K562 (cell line): ENCODE measurements at regions of chr22 and their contacts with region 1.

Region 1: DNA sequence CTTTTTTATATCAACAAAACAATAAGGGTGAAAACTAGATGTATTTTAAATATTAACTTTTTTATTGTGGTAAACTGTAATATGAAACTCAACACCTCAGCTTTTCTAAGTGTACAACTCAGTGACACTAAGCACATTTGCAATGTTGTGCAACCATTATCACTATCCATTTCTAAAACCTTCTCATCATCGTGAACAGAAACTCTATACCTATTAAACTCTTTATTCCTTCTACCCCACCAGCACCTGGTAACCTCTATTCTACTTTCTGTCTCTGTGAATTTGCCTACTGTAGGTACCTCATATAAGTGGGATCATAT is 9.4 kb downstream of the HORMAD2 start:
- DNase-seq: no peak
- ATAC-seq: no peak
- H3K4me3 ChIP-seq: no peak overlapping the region
- H3K27ac ChIP-seq: no peak overlapping the region
- H3K4me1 ChIP-seq: no peaks in the 10 kb centered on the region; a peak in 1 of 5 replicates
- H3K27me3 ChIP-seq: no peaks in the 10 kb centered on the region
- CTCF ChIP-seq: no peak
- EP300 ChIP-seq: no peak
- POLR2A ChIP-seq: no peak
- RAD21 ChIP-seq: no peak

Region 2: DNA sequence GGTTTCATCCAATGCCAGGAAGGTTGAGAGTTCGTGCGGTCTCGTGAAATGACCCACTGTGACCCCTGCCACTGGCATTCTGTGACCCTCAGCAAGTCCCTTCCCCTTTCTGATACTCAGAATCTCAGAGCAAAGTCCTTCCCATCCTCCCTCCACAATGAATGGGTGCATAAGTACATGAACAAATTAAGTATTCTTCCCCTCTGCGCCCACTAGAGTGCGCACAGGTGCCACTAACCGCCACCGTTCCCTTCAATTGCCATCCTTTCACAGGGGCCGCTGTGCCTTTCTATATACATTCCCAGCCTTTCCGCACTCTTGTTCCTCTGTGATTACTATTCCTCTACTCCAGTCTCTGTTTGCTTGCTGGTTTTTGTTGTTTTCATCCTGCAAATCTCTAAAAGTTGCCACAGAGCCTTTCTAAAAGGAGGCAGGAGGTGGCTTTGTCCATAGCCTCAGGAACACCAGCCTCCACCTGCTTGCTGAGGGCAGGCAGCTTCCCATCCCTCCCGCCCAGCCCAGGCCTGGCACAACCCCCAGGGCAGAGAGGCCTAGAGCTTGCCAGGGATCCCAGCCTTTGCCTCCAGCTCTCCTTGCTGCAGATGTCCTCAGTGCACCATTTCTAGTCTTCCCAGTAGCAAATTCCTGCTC is 694.6 kb before region 1 on chr22:
- CTCF ChIA-PET with region 1: interaction called, 10 read pairs
- POLR2A ChIA-PET with region 1: no interaction called
- in situ Hi-C with region 1: no loop called
- intact Hi-C with region 1: no loop called
- DNase-seq: peak; percentile 47 to 78 (median 60)
- ATAC-seq: peak; percentile 96
- H3K4me3 ChIP-seq: no peak overlapping the region
- H3K27ac ChIP-seq: no peak overlapping the region
- H3K4me1 ChIP-seq: peaks cover 0 to 2% of the 10 kb centered on the region in 2 experiments; a peak in 1 of 5 replicates
- H3K27me3 ChIP-seq: no peaks in the 10 kb centered on the region
- CTCF ChIP-seq: peak; percentile 83 to 95 (median 91)
- EP300 ChIP-seq: no peak
- POLR2A ChIP-seq: no peak
- RAD21 ChIP-seq: peak; percentile 73 to 86

Region 3: GRCh38 chr22:29625090-29625825 is 464.4 kb before region 1 on chr22:
- CTCF ChIA-PET with region 1: interaction called, 10 read pairs
- POLR2A ChIA-PET with region 1: no interaction called
- in situ Hi-C with region 1: no loop called
- intact Hi-C with region 1: no loop called
- DNase-seq: peak; percentile 33 to 68 (median 43)
- ATAC-seq: peak; percentile 80
- H3K4me3 ChIP-seq: no peak overlapping the region
- H3K27ac ChIP-seq: no peak overlapping the region
- H3K4me1 ChIP-seq: peaks cover 5% of the 10 kb centered on the region in 2 experiments; a peak in 4 of 5 replicates
- H3K27me3 ChIP-seq: no peaks in the 10 kb centered on the region
- CTCF ChIP-seq: peak; percentile 58 to 75 (median 74); a peak in 5 of 6 replicates
- EP300 ChIP-seq: no peak
- POLR2A ChIP-seq: no peak
- RAD21 ChIP-seq: peak; percentile 37 to 50

Region 4: DNA sequence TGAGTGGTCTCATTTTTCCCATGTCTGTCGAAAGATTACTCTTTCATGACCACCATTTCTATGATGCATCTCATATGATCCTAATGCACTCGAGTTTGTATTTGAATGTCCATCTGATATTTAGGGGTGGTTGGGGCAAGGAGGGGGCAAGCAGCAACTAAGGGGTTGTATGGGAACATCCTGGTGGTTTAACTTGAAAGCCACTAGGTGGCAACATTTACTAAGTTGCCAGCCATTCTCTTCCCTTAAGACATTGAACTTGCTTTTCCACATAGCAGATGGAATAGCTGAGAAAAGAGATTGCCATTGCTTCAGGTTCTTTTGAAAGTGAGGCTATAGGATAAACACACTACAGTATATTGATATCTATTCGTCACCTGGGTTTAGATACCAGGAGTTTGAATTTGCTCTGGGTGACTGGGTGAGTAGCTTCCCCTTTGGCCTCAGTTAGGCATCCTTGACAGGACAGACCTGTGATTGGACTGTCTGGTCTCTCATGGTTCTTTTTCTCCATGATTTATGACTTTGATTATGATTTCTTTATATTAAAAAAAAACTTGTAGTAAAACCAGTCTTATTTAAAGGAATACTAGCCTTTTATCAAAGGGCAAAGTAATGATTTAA is 453.8 kb before region 1 on chr22:
- CTCF ChIA-PET with region 1: interaction called, 16 read pairs
- POLR2A ChIA-PET with region 1: interaction called, 3 read pairs
- in situ Hi-C with region 1: no loop called
- intact Hi-C with region 1: loop called (anchors 2 kb)
- DNase-seq: peak; percentile 29 to 41 (median 36)
- ATAC-seq: peak; percentile 82
- H3K4me3 ChIP-seq: no peak overlapping the region
- H3K27ac ChIP-seq: no peak overlapping the region
- H3K4me1 ChIP-seq: peaks cover 0 to 9% of the 10 kb centered on the region in 2 experiments; a peak in 3 of 5 replicates
- H3K27me3 ChIP-seq: no peaks in the 10 kb centered on the region
- CTCF ChIP-seq: peak; percentile 58 to 69 (median 63)
- EP300 ChIP-seq: no peak
- POLR2A ChIP-seq: no peak
- RAD21 ChIP-seq: peak; percentile 49 to 68

Region 5: DNA sequence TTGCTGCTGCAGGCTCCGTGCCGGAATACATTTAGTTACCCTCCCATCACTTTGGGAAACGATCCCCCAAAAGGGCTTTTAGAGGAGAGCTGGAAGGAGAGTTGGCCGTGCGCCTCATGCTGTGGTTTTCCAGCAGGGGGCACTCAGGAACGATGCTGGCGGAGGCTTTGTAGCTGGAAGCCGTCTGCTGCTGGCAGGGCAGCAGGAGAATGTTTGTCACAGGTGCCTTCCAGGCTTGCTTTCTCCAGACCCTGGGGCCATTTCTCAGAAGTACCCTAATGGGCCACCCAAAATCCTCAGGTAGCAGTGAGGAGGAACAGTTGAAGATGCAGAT is 399.8 kb before region 1 on chr22:
- CTCF ChIA-PET with region 1: interaction called, 29 read pairs
- POLR2A ChIA-PET with region 1: no interaction called
- in situ Hi-C with region 1: loop called (anchors 25 kb)
- intact Hi-C with region 1: no loop called
- DNase-seq: peak in 2 of 4 experiments; percentile 43 to 50
- ATAC-seq: peak; percentile 73
- H3K4me3 ChIP-seq: no peak overlapping the region
- H3K27ac ChIP-seq: no peak overlapping the region
- H3K4me1 ChIP-seq: peaks cover 0 to 13% of the 10 kb centered on the region in 2 experiments; a peak in 2 of 5 replicates
- H3K27me3 ChIP-seq: no peaks in the 10 kb centered on the region
- CTCF ChIP-seq: peak; percentile 69 to 78 (median 71)
- EP300 ChIP-seq: no peak
- POLR2A ChIP-seq: no peak
- RAD21 ChIP-seq: peak; percentile 44 to 65

Region 6: DNA sequence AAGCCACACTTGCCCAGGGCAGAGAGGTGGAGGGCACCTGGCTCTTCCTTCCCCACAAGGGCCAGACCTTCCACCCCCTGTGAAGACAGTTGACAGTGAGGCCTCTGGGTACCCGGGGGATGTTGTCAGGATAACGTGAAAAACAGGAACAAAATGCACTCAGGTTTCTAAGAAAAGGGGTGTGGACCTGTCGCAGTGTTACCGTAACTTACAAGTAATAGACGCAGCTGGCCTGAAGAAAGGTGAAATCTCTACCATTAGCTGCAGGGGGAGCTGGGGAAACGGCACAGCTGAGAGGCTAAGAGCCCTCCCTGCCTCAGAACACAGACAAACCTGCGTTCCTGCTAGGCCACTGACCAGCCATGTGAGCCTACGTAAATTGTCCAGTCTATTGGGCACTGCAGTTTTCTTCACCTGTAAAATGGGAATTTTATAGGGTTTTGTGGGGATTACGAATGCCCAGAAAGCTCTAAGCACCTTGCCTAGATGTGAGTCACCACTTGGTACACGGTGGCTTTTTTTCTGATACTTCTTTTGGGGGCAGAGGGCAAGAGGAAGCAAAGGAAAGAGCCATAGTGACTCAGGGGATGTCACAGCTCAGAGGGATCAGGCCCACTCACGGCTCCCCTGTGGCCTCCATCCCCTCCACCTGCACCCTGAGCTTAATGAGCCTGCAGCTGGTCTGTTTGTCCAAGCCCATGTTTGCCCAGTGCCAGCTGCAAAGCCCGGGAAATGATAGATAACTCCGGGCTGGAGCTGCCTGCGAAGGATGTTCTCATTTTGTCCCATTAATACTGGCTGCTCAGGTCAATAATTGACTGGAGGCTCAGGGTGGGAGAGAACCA is 388.2 kb before region 1 on chr22:
- CTCF ChIA-PET with region 1: interaction called, 16 read pairs
- POLR2A ChIA-PET with region 1: no interaction called
- in situ Hi-C with region 1: loop called (anchors 25 kb)
- intact Hi-C with region 1: loop called (anchors 5 kb)
- DNase-seq: peak; percentile 20 to 67 (median 46)
- ATAC-seq: peak; percentile 94
- H3K4me3 ChIP-seq: no peak overlapping the region
- H3K27ac ChIP-seq: no peak overlapping the region
- H3K4me1 ChIP-seq: peaks cover 8 to 35% of the 10 kb centered on the region in 2 experiments; a peak in 4 of 5 replicates
- H3K27me3 ChIP-seq: no peaks in the 10 kb centered on the region
- CTCF ChIP-seq: peak; percentile 51 to 63 (median 55)
- EP300 ChIP-seq: no peak
- POLR2A ChIP-seq: no peak
- RAD21 ChIP-seq: peak in 1 of 2 experiments; percentile 69; a peak in 2 of 4 replicates

Region 7: DNA sequence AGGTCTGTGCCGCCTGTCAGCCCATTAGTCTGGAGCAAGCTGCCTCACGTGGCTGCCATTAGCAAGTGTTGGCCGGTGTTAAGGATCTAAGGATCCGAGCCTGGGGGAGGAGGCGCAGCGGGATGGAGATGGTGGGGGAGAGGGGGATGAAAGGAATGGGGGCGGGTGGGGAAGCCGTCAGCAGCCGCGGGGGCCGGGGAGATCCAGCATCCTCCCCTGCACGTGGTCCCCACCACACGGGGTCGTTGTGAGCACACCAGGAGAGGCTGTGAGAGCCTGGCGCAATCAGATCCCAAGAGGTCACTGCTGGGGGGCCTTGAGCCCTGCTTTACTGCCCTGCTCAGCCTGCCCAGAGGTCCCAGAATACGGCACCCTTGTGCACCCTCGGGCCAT is 362.5 kb before region 1 on chr22:
- CTCF ChIA-PET with region 1: interaction called, 14 read pairs
- POLR2A ChIA-PET with region 1: no interaction called
- in situ Hi-C with region 1: no loop called
- intact Hi-C with region 1: no loop called
- DNase-seq: peak; percentile 71 to 89 (median 81)
- ATAC-seq: peak; percentile 85
- H3K4me3 ChIP-seq: no peak overlapping the region
- H3K27ac ChIP-seq: no peak overlapping the region
- H3K4me1 ChIP-seq: peaks cover 14 to 42% of the 10 kb centered on the region in 2 experiments; a peak in 4 of 5 replicates
- H3K27me3 ChIP-seq: no peaks in the 10 kb centered on the region
- CTCF ChIP-seq: peak; percentile 28 to 62 (median 50); a peak in 5 of 6 replicates
- EP300 ChIP-seq: no peak
- POLR2A ChIP-seq: no peak
- RAD21 ChIP-seq: peak; percentile 14 to 54; a peak in 2 of 4 replicates

Region 8: DNA sequence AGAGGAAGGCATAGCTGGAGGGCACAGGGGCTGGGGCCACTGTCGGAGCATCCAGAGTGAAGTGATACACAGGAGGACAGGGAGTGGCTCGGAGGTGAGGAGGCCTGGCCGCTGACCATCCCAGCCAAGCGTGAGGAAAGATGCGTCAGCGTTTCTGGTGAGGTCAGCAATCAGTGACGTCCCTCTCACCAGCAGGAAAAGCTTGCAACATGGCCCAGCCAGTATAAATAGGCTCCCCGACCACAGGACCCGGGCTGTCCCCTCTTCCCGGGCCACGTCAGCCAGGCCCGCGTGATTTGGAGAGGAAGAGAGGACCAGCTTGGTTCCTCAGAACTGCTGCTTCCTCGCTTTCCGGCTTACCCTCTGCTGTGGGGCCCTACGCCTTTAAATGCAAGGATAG is 181.2 kb after region 1 on chr22:
- CTCF ChIA-PET with region 1: no interaction called
- POLR2A ChIA-PET with region 1: no interaction called
- in situ Hi-C with region 1: no loop called
- intact Hi-C with region 1: no loop called
- DNase-seq: peak; percentile 33 to 59 (median 49)
- ATAC-seq: peak; percentile 70
- H3K4me3 ChIP-seq: no peak overlapping the region
- H3K27ac ChIP-seq: no peak overlapping the region
- H3K4me1 ChIP-seq: peaks cover 2 to 30% of the 10 kb centered on the region in 2 experiments; a peak in 4 of 5 replicates
- H3K27me3 ChIP-seq: no peaks in the 10 kb centered on the region
- CTCF ChIP-seq: no peak
- EP300 ChIP-seq: no peak
- POLR2A ChIP-seq: no peak
- RAD21 ChIP-seq: no peak